Activated CD4-positive, alpha-beta memory T cell treated with anti-CD3 and anti-CD28 coated beads, Interleukin-2, amount 10 ng/mL, durations not matched to agents 7 days and 5 days (primary cell): ENCODE measurements at regions of chr21 and their contacts with region 1.

Region 1: GRCh38 chr21:33324291-33325221 is at the start of gene IFNAR1:
- DNase-seq: peak; percentile 98
- H3K4me3 Mint-ChIP-seq: no peak within 1 kb of the TSS
- H3K27ac Mint-ChIP-seq: no peak within 1 kb of the TSS
- H3K4me1 Mint-ChIP-seq: peaks cover 21% of the 10 kb centered on the region
- H3K27me3 Mint-ChIP-seq: no peaks in the 10 kb centered on the region
- total RNA-seq, gene IFNAR1: 38.6 to 39.3 TPM

Region 2: GRCh38 chr21:33229784-33230544 is 94.6 kb before region 1 on chr21 and contains the start of gene IFNAR2:
- CTCF ChIA-PET with region 1: no interaction called
- POLR2A ChIA-PET with region 1: interaction called, 19 read pairs
- DNase-seq: peak; percentile 78
- H3K4me3 Mint-ChIP-seq: peak within 1 kb of the TSS; percentile 82
- H3K27ac Mint-ChIP-seq: peak within 1 kb of the TSS; percentile 92
- H3K4me1 Mint-ChIP-seq: peaks cover 42% of the 10 kb centered on the region
- H3K27me3 Mint-ChIP-seq: no peaks in the 10 kb centered on the region
- total RNA-seq, gene IFNAR2: 60.1 to 61.9 TPM

Region 3: DNA sequence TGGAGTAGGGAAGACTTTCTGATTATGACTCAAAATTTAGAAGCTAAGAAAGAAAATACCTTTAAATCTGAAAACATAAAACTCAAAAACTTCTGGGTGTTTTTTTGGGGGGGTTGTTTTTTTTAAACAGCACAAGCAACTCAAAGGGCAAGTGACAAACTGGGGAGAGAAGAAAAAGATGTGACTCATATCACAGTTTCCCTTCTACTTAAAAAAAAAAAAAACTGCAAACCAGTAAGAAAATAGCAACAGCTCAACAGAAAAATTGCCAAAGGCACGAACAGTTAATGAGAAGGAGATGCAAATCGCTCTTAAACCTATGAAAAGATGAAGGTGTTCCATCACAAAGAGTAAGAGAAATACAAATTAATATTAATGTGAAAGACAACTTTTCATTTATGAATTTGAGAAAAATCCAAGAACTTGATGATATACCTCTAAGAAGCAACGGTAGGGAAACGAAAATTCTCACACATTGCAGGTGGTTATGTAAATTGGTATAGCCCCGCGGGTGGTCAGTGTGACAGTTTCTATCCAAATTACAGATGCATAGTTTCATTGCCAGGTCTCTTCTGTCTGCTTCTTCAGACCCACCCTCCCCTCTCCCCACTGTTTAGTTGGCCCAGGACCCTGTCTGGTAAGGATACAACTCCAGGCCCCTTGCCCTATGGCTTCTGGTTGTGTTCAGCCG is 85.8 kb before region 1 on chr21:
- CTCF ChIA-PET with region 1: interaction called, 4 read pairs
- POLR2A ChIA-PET with region 1: interaction called, 16 read pairs
- DNase-seq: peak; percentile 26
- H3K4me3 Mint-ChIP-seq: peak overlapping the region; percentile 41
- H3K27ac Mint-ChIP-seq: peak overlapping the region; percentile 92
- H3K4me1 Mint-ChIP-seq: peaks cover 71% of the 10 kb centered on the region
- H3K27me3 Mint-ChIP-seq: no peaks in the 10 kb centered on the region

Region 4: GRCh38 chr21:33266050-33266788 is 58.3 kb before region 1 on chr21 and contains the start of gene IL10RB:
- CTCF ChIA-PET with region 1: no interaction called
- POLR2A ChIA-PET with region 1: interaction called, 18 read pairs
- DNase-seq: peak; percentile 76
- H3K4me3 Mint-ChIP-seq: peak within 1 kb of the TSS; percentile 95
- H3K27ac Mint-ChIP-seq: peak within 1 kb of the TSS; percentile 88
- H3K4me1 Mint-ChIP-seq: peaks cover 53% of the 10 kb centered on the region
- H3K27me3 Mint-ChIP-seq: no peaks in the 10 kb centered on the region
- total RNA-seq, gene IL10RB: 33.9 to 36.1 TPM

Region 5: GRCh38 chr21:33444499-33444898 is 119.9 kb after region 1 on chr21:
- CTCF ChIA-PET with region 1: interaction called, 17 read pairs
- POLR2A ChIA-PET with region 1: interaction called, 3 read pairs
- DNase-seq: no peak
- H3K4me3 Mint-ChIP-seq: no peak overlapping the region
- H3K27ac Mint-ChIP-seq: no peak overlapping the region
- H3K4me1 Mint-ChIP-seq: peaks cover 4% of the 10 kb centered on the region
- H3K27me3 Mint-ChIP-seq: no peaks in the 10 kb centered on the region